ENCODE measurements at regions of chr6 and their contacts with region 1.

Region 1: DNA sequence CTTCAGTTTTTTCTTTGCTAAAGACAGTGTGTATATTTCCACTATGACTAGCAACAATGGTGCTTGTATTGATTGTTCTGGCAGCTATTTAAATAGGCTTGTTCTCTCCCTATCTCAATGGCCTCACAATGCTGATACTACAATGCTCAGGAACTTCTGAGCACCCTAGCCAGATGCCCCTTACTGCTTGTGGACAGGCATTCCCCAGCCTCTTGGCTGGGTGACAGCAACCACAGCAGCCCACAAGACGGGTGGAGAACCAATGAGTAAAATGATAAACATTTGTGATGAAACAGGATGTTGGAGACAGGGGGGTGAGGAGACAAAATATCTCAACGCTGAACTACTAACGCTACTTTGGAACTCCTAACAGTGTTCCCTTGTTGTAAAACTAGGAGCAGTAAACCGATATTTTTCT is 42.3 kb downstream of the HIVEP2 start:
- DNase-seq: peak; percentile 67
- ATAC-seq: peak; percentile 79
- H3K4me3 ChIP-seq: no peak overlapping the region
- H3K27ac ChIP-seq: peak overlapping the region; percentile 63
- H3K4me1 ChIP-seq: peaks cover 16% of the 10 kb centered on the region; the same call in 1 of the 2 replicates
- H3K27me3 ChIP-seq: no peaks in the 10 kb centered on the region
- CTCF ChIP-seq: no peak
- EP300 ChIP-seq: peak; percentile 53 to 65; a peak in 2 of 4 replicates
- POLR2A ChIP-seq: no peak
- RAD21 ChIP-seq: no peak

Region 2: GRCh38 chr6:141359953-141360352 is 1542.7 kb before region 1 on chr6:
- CTCF ChIA-PET with region 1: no interaction called
- POLR2A ChIA-PET with region 1: no interaction called
- RAD21 ChIA-PET with region 1: no interaction called
- SMC1A ChIA-PET with region 1: no interaction called
- in situ Hi-C with region 1: no loop called
- intact Hi-C with region 1: no loop called
- DNase-seq: no peak
- ATAC-seq: no peak
- H3K4me3 ChIP-seq: no peak overlapping the region
- H3K27ac ChIP-seq: no peak overlapping the region
- H3K4me1 ChIP-seq: no peaks in the 10 kb centered on the region
- H3K27me3 ChIP-seq: no peaks in the 10 kb centered on the region
- CTCF ChIP-seq: no peak
- EP300 ChIP-seq: no peak
- POLR2A ChIP-seq: no peak
- RAD21 ChIP-seq: no peak

Region 3: GRCh38 chr6:142416179-142416578 is 486.5 kb before region 1 on chr6:
- CTCF ChIA-PET with region 1: no interaction called
- POLR2A ChIA-PET with region 1: no interaction called
- RAD21 ChIA-PET with region 1: no interaction called
- SMC1A ChIA-PET with region 1: no interaction called
- in situ Hi-C with region 1: no loop called
- intact Hi-C with region 1: no loop called
- DNase-seq: no peak
- ATAC-seq: no peak
- H3K4me3 ChIP-seq: no peak overlapping the region
- H3K27ac ChIP-seq: no peak overlapping the region
- H3K4me1 ChIP-seq: no peaks in the 10 kb centered on the region
- H3K27me3 ChIP-seq: no peaks in the 10 kb centered on the region; a peak in 1 of 4 replicates
- CTCF ChIP-seq: no peak
- EP300 ChIP-seq: no peak
- POLR2A ChIP-seq: no peak
- RAD21 ChIP-seq: no peak

Region 4: GRCh38 chr6:142838821-142839685 is 63.6 kb before region 1 on chr6:
- CTCF ChIA-PET with region 1: interaction called, 3 read pairs
- POLR2A ChIA-PET with region 1: interaction called, 4 read pairs
- RAD21 ChIA-PET with region 1: interaction called, 16 read pairs
- SMC1A ChIA-PET with region 1: interaction called, 15 read pairs
- in situ Hi-C with region 1: no loop called
- intact Hi-C with region 1: no loop called
- DNase-seq: no peak
- ATAC-seq: peak; percentile 45
- H3K4me3 ChIP-seq: no peak overlapping the region
- H3K27ac ChIP-seq: peak overlapping the region; percentile 71
- H3K4me1 ChIP-seq: peaks cover 42% of the 10 kb centered on the region
- H3K27me3 ChIP-seq: no peaks in the 10 kb centered on the region
- CTCF ChIP-seq: no peak
- EP300 ChIP-seq: peak; percentile 9 to 65; a peak in 2 of 4 replicates
- POLR2A ChIP-seq: no peak
- RAD21 ChIP-seq: no peak

Region 5: GRCh38 chr6:142913511-142914047 is 10.9 kb after region 1 on chr6:
- CTCF ChIA-PET with region 1: interaction called, 3 read pairs
- POLR2A ChIA-PET with region 1: interaction called, 3 read pairs
- RAD21 ChIA-PET with region 1: interaction called, 4 read pairs
- SMC1A ChIA-PET with region 1: interaction called, 23 read pairs
- in situ Hi-C with region 1: no loop called
- intact Hi-C with region 1: no loop called
- DNase-seq: peak; percentile 94
- ATAC-seq: peak; percentile 89
- H3K4me3 ChIP-seq: peak overlapping the region; percentile 27
- H3K27ac ChIP-seq: peak overlapping the region; percentile 95
- H3K4me1 ChIP-seq: peaks cover 32% of the 10 kb centered on the region
- H3K27me3 ChIP-seq: no peaks in the 10 kb centered on the region
- CTCF ChIP-seq: peak; percentile 11 to 27 (median 26); a peak in 3 of 6 replicates
- EP300 ChIP-seq: peak; percentile 72 to 97; a peak in 3 of 4 replicates
- POLR2A ChIP-seq: peak; percentile 43; the same call in 1 of the 2 replicates
- RAD21 ChIP-seq: peak; percentile 53

Region 6: GRCh38 chr6:142926494-142927270 is 24.0 kb after region 1 on chr6:
- CTCF ChIA-PET with region 1: interaction called, 5 read pairs
- POLR2A ChIA-PET with region 1: interaction called, 3 read pairs
- RAD21 ChIA-PET with region 1: interaction called, 46 read pairs
- SMC1A ChIA-PET with region 1: interaction called, 14 read pairs
- in situ Hi-C with region 1: no loop called
- intact Hi-C with region 1: no loop called
- DNase-seq: no peak
- ATAC-seq: peak; percentile 80
- H3K4me3 ChIP-seq: peak overlapping the region; percentile 88
- H3K27ac ChIP-seq: peak overlapping the region; percentile 97
- H3K4me1 ChIP-seq: peaks cover 8% of the 10 kb centered on the region
- H3K27me3 ChIP-seq: no peaks in the 10 kb centered on the region
- CTCF ChIP-seq: no peak
- EP300 ChIP-seq: peak; percentile 64 to 66; a peak in 2 of 4 replicates
- POLR2A ChIP-seq: peak; percentile 86
- RAD21 ChIP-seq: no peak

Region 7: DNA sequence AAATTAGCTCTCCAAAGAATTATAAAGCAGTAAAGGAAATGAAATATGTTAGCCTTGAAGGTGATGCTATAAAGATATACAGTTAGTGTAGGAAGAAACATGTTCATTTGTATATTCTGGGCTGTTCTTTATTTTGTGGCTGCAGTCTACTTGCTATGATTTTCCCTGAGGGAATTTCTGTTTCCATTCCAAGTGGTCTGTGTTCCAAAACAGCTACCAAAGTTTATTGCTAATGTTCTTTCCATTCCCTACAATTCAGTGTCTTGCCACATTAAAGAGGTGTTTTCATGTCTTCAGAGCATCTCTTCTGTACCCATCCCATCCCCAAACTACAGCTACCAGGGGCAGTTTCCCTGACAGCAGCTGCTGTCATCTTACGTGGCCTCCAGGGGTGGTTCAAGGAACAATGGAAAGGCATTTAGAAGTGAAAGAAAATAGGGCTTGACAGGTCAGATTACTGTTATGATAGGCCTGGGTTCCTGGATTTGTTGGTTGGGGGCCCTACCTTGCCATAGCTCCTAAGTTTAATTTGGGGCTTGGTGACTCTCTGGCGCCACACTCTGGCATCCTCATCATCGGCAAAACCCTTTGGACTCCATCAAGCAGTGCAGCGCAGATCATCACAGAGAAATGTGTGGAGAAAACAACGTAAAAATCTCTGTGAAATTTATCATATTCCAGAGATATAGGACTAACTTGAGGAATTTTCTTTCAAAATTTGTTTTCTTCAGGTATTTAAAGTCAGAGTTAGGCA is 124.2 kb after region 1 on chr6:
- CTCF ChIA-PET with region 1: interaction called, 4 read pairs
- POLR2A ChIA-PET with region 1: no interaction called
- RAD21 ChIA-PET with region 1: interaction called, 17 read pairs
- SMC1A ChIA-PET with region 1: interaction called, 5 read pairs
- in situ Hi-C with region 1: no loop called
- intact Hi-C with region 1: no loop called
- DNase-seq: no peak
- ATAC-seq: peak; percentile 76
- H3K4me3 ChIP-seq: no peak overlapping the region
- H3K27ac ChIP-seq: no peak overlapping the region
- H3K4me1 ChIP-seq: no peaks in the 10 kb centered on the region
- H3K27me3 ChIP-seq: no peaks in the 10 kb centered on the region
- CTCF ChIP-seq: peak; percentile 50 to 54 (median 50); a peak in 5 of 6 replicates
- EP300 ChIP-seq: no peak
- POLR2A ChIP-seq: no peak
- RAD21 ChIP-seq: peak; percentile 60